PC-9 (cell line): ENCODE measurements at regions of chr1 and their contacts with region 1.

Region 1: DNA sequence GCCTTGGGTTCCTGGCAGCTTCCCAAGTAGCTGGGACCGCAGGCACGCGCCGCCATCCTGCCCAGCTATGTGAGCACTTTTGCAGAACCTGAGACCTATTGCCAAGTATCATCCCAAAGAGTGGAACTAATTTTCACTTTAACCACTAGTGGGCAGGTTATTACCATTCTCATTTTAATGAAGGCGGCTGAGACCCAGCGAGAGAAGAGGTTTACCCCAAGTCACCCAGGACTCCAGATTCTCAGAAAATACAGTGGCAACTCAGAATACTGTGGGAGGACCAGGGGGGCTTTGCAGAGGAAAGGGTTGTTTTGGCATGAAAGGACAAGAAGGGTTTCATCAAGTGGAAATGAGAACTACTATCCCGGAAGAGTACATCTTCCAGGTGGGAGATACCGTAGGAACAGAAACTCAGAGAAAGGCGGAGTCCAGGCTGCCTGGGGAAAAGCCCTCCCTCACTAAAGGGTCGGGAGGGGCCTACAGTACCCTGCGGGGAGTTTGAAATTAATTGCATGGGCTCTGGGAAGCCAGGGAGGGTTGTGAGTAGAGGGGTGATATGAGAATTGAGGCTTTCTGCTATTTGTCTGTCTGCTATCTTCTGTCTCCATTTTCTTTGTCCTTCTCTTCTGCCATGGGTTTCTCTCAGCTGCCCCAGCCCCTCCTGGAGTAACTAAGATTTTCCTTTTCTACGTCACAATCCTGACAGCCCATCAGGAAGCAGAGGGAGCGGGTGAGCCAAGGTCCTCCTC is 7.2 kb upstream of the SEMA4A start:
- DNase-seq: peak; percentile 87 to 90
- H3K4me3 ChIP-seq: no peak overlapping the region
- H3K27ac ChIP-seq: no peak overlapping the region
- H3K4me1 ChIP-seq: no peaks in the 10 kb centered on the region
- H3K27me3 ChIP-seq: peaks cover 15% of the 10 kb centered on the region; the same call in 1 of the 2 replicates
- CTCF ChIP-seq: peak; percentile 78

Region 2: GRCh38 chr1:155193275-155193990 is 952.8 kb before region 1 on chr1:
- CTCF ChIA-PET with region 1: no interaction called
- POLR2A ChIA-PET with region 1: interaction called, 14 read pairs
- intact Hi-C with region 1: no loop called
- DNase-seq: peak; percentile 79 to 96
- H3K4me3 ChIP-seq: peak overlapping the region; percentile 73
- H3K27ac ChIP-seq: peak overlapping the region; percentile 59
- H3K4me1 ChIP-seq: peaks cover 14% of the 10 kb centered on the region
- H3K27me3 ChIP-seq: no peaks in the 10 kb centered on the region
- CTCF ChIP-seq: peak; percentile 97

Region 3: DNA sequence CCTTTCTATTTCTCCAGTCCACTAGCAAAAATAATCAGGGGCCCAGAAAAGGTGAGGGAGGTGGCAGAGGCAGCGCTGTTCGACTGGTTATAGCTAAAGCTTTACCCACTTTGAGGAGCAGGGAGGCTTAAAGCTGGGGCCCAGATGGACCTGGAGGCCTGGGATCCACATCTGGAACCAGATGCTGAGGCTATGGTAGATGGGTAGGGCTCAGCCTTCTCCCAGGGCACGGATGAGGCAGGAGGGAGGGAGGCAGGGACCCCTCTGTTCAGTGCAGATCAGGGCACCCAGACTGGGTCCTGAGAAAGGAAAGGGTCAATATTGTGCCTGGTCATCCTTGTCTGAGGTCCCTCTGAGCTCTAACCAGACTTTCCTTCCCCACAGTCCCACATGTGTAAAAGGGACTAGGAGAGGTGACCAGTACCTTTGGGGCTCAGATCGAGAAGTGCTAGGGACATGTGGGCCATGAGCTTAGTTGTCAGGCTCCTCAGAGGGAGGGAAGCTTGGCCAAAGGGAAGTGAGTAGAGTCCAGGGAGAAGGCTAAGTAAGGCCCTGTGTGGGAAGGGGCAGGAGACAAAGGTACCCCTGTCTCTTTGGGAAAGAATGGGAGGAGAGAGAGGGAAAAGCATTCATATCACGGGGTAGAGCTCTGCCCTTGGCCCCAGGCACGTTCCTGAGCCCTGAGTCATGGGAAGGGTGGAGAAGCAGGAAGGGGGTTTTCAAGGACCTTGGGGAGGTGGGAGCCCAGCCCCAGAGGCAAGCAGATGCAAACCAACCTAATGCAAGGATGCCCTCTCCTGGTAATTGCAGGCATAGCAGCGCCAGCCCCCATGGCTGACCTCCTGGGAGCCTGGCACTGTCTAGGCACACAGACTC is 16.2 kb before region 1 on chr1:
- CTCF ChIA-PET with region 1: interaction called, 4 read pairs
- POLR2A ChIA-PET with region 1: interaction called, 10 read pairs
- intact Hi-C with region 1: no loop called
- DNase-seq: peak; percentile 94 to 98
- H3K4me3 ChIP-seq: peak overlapping the region; percentile 20; the same call in 1 of the 2 replicates
- H3K27ac ChIP-seq: peak overlapping the region; percentile 98
- H3K4me1 ChIP-seq: peaks cover 56% of the 10 kb centered on the region
- H3K27me3 ChIP-seq: no peaks in the 10 kb centered on the region
- CTCF ChIP-seq: peak; percentile 99

Region 4: DNA sequence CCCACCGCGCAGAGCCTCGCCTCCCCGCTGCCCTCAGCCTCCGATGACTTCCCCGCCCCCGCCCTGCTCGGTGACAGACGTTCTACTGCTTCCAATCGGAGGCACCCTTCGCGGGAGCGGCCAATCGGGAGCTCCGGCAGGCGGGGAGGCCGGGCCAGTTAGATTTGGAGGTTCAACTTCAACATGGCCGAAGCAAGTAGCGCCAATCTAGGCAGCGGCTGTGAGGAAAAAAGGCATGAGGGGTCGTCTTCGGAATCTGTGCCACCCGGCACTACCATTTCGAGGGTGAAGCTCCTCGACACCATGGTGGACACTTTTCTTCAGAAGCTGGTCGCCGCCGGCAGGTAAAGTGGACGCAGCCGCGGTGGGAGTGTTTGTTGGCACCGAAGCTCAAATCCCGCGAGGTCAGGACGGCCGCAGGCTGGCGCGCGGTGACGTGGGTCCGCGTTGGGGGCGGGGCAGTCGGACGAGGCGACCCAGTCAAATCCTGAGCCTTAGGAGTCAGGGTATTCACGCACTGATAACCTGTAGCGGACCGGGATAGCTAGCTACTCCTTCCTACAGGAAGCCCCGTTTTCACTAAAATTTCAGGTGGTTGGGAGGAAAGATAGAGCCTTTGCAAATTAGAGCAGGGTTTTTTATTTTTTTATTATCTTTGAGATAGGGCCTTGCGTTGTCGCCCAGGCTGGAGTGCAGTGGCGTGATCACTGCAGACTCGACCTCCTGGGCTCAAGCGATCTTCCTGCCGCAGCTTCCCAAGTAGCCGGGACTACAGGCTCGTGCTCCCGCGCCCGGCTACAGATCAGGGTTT is 66.8 kb after region 1 on chr1 and contains the start of gene PMF1:
- CTCF ChIA-PET with region 1: interaction called, 5 read pairs
- POLR2A ChIA-PET with region 1: interaction called, 15 read pairs
- intact Hi-C with region 1: no loop called
- DNase-seq: peak; percentile 90 to 95
- H3K4me3 ChIP-seq: peak within 1 kb of the TSS; percentile 67
- H3K27ac ChIP-seq: peak within 1 kb of the TSS; percentile 82
- H3K4me1 ChIP-seq: peaks cover 22% of the 10 kb centered on the region
- H3K27me3 ChIP-seq: no peaks in the 10 kb centered on the region
- CTCF ChIP-seq: no peak
- total RNA-seq, gene PMF1: 46.0 and 50.2 TPM in 2 replicates

Region 5: DNA sequence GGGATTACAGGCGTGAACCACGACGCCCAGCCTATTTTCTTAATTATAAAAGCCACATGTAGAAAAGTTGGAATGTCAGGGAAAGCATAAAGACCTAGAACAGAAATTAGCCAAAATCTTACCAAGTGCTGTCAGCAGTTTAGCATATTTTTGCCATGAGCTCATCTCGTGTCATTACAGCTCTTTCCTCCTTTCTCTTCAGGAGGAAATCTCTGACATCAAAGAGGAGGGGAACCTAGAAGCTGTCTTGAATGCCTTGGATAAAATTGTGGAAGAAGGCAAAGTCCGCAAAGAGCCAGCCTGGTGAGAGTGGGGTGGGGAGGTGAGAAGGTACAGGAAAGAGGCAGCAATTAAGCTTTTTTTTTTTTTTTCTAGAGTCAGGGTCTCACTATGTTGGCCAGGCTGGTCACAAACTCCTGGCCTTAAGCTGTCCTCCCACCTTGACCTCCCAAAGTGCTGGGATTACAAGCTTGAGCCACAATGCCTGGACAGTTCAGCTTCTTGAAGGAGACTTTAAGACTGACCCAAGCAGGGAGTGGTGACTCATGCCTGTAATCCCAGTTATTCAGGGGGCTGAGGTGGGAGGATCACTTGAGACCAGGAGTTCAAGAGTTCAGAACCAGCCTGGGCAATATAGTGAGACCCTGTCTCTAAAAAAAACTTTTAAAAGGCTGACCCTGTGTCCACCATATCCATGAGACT is 87.4 kb after region 1 on chr1:
- CTCF ChIA-PET with region 1: interaction called, 14 read pairs
- POLR2A ChIA-PET with region 1: interaction called, 4 read pairs
- intact Hi-C with region 1: no loop called
- DNase-seq: no peak
- H3K4me3 ChIP-seq: no peak overlapping the region
- H3K27ac ChIP-seq: no peak overlapping the region
- H3K4me1 ChIP-seq: no peaks in the 10 kb centered on the region
- H3K27me3 ChIP-seq: no peaks in the 10 kb centered on the region
- CTCF ChIP-seq: no peak

Region 6: DNA sequence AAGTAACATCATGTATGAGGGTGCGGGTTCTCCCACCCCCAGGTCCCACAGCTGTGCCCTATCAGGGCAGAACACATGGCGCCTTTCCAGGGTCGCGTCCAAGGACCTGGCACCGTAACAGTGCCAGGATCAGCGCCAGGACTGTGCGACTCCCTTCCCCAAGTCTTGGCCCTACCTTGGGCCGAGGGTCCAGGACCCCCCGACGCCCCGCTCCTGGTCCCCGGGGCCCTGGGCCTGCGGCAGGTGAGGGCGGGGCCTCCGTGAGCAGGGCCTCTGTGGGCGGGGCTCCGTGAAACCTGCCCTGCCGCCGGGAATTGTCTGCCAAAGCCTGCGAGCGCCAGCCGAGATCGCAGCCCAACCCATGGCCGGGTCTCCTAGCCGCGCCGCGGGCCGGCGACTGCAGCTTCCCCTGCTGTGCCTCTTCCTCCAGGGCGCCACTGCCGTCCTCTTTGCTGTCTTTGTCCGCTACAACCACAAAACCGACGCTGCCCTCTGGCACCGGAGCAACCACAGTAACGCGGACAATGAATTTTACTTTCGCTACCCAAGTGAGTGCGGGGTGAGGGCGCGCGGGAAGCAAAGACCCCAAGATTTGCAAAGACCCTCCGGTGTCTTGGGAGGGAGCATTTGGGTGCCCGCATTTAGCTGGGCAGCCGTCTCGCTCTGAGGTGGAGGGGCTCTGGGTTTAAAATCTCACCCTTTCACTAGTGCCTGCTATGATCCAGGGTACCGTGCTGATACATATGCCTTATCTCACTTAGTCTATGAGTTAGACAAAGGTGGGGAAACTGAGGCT is 222.9 kb after region 1 on chr1 and contains the start of gene RHBG:
- CTCF ChIA-PET with region 1: no interaction called
- POLR2A ChIA-PET with region 1: interaction called, 10 read pairs
- intact Hi-C with region 1: no loop called
- DNase-seq: peak in 1 of 2 experiments; percentile 74
- H3K4me3 ChIP-seq: peak within 1 kb of the TSS; percentile 71
- H3K27ac ChIP-seq: no peak within 1 kb of the TSS
- H3K4me1 ChIP-seq: peaks cover 45% of the 10 kb centered on the region
- H3K27me3 ChIP-seq: no peaks in the 10 kb centered on the region
- CTCF ChIP-seq: no peak
- total RNA-seq, gene RHBG: 1.8 and 4.0 TPM in 2 replicates